WTC11 (cell line): ENCODE measurements at regions of chr3 and their contacts with region 1.

Region 1: DNA sequence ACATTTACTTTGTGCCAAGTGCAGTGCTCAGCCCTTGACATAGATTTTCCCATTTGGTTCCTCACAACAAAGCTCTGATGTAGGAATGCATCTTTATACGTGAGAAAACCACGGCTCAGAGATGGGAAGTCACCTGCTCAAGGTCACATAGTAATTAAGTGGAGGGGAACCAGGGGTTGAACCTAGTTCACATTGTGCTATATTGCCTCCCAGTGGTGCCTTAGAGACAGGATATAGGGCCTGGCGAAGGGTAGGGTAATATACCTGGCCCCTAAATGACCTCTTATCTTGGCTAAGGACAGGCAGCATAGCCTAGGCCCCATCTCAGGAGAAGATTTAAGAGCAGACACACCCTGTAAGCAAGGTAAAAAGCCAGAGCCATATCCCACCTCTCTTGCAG is 71.5 kb downstream of the FOXP1 start:
- DNase-seq: peak; percentile 20
- ATAC-seq: peak; percentile 97
- H3K4me3 Mint-ChIP-seq: no peak overlapping the region
- H3K27ac Mint-ChIP-seq: no peak overlapping the region
- H3K4me1 Mint-ChIP-seq: peaks cover 23% of the 10 kb centered on the region
- H3K27me3 Mint-ChIP-seq: no peaks in the 10 kb centered on the region
- CTCF ChIP-seq: peak; percentile 23; the same call in 1 of the 2 replicates

Region 2: GRCh38 chr3:71487418-71487817 is 24.6 kb before region 1 on chr3:
- CTCF ChIA-PET with region 1: no interaction called
- POLR2A ChIA-PET with region 1: no interaction called
- DNase-seq: no peak
- ATAC-seq: no peak
- H3K4me3 Mint-ChIP-seq: no peak overlapping the region
- H3K27ac Mint-ChIP-seq: no peak overlapping the region
- H3K4me1 Mint-ChIP-seq: peaks cover 35% of the 10 kb centered on the region
- H3K27me3 Mint-ChIP-seq: no peaks in the 10 kb centered on the region
- CTCF ChIP-seq: no peak

Region 3: DNA sequence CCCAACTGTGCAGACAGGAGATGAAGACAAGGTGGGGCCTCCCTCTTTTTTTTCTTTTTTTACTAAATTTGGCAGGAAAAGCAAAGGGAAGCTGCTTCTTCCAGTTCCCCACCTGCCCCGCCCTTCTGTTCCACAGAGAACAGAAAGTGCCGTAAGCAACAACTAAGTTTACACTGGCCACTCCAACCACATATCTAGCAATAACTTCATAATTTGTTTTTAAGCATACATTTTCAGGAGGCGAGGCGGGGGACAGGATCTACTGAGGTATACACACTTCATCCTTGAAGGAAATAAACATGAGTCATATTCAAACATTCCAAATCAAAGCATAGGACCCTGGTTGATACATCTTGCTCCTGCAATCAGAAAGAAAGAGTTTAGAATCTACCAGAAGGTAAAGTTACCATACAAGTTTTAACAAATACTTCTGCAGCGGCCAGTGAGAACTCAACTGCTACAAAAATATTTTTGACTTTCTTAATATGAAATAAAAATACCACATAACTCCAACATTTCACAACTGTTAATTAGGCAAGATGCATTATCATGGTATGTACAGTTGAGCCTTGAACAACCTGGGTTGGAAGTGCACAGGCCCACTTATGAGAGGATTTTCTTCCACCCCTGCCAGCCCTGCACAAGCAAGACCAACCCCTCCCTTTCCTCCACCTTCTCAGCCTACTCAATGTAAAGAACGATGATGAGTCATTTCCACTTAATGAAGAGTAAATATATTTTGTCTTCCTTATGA is 20.8 kb after region 1 on chr3:
- CTCF ChIA-PET with region 1: interaction called, 3 read pairs
- POLR2A ChIA-PET with region 1: interaction called, 11 read pairs
- DNase-seq: no peak
- ATAC-seq: no peak
- H3K4me3 Mint-ChIP-seq: no peak overlapping the region
- H3K27ac Mint-ChIP-seq: no peak overlapping the region
- H3K4me1 Mint-ChIP-seq: peaks cover 36% of the 10 kb centered on the region
- H3K27me3 Mint-ChIP-seq: no peaks in the 10 kb centered on the region
- CTCF ChIP-seq: no peak